ENCODE measurements at regions of chr3 and their contacts with region 1.

Region 1: DNA sequence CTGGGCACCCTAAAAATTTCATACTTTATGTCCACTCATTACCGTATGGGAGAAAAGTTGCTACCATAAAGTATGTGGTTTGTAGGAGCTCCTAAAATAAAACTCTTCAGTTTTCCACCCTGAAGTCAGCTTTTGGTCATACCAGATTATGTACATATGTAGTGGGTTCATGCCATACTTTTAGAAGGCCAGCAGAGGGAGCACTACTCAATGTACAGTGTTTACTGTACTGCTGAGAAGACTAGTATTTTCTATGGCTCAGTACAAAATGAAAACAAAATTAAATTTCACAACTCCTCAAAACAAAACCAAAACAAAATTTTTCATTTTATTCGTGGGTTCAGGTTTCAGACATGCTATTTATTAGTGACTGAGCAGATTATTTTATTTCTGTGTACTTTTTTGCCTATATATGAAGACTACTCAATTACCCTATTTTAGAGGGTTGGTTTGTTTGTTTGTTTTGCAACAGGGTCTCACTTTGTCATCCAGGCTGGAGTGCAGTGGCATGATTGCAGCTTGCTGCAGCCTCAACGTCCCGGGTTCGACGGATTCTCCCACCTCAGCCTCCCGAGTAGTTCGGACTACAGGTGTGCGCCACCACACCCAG is 24.3 kb downstream of the NXPE3 start:
- DNase-seq: peak; percentile 68
- ATAC-seq: peak; percentile 100
- H3K4me3 Mint-ChIP-seq: no peak overlapping the region
- H3K27ac Mint-ChIP-seq: peak overlapping the region; percentile 66
- H3K4me1 Mint-ChIP-seq: peaks cover 17% of the 10 kb centered on the region
- H3K27me3 Mint-ChIP-seq: no peaks in the 10 kb centered on the region

Region 2: DNA sequence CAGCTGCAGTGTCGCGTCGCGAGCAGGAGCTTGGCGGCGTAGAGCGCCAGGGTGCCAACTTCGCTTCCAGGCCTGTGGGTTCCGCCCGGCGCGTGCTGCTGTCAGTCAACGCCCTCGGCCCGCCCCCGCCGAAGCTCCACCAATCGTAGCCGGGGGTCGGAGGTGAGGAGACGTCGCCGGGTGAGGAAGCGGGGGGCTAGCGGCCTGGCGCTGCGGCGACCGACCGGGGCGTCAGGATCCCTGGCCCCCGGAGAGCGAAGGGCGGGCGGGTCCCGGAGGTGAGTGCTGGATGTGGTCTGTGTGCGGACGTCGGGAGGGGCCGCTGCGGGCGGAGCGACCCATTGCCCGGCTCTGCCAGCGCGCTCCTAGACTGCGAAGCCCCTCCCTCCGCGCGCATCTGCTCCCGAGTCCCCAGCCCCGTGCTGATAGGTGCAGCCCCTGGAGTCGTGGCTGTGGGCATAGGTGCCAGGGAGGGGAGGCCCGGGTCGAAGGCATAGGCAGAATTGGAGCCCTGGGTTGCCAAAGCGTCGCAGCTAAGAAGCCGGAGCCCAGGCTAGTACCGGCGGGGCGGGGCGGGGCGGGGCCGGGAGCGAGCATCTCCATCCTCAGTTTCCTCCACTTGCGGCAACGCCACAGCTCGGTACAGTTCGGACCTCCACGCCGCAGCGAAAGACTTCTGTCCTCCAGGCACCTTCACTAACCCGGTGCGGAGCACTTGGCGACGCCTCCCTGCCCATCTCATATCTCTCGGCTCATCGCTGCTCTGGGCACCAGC is 24.0 kb before region 1 on chr3 and contains the start of gene NXPE3:
- CTCF ChIA-PET with region 1: interaction called, 11 read pairs
- DNase-seq: peak; percentile 95
- ATAC-seq: peak; percentile 96
- H3K4me3 Mint-ChIP-seq: peak within 1 kb of the TSS; percentile 90
- H3K27ac Mint-ChIP-seq: peak within 1 kb of the TSS; percentile 90
- H3K4me1 Mint-ChIP-seq: peaks cover 37% of the 10 kb centered on the region
- H3K27me3 Mint-ChIP-seq: no peaks in the 10 kb centered on the region
- total RNA-seq, gene NXPE3: 19.6 to 20.4 TPM

Measured in activated CD8-positive, alpha-beta memory T cell treated with anti-CD3 and anti-CD28 coated beads, Interleukin-2, amount 10 ng/mL, durations not matched to agents 7 days and 5 days (primary cell).